ENCODE measurements at regions of chr9 and their contacts with region 1.

Region 1: DNA sequence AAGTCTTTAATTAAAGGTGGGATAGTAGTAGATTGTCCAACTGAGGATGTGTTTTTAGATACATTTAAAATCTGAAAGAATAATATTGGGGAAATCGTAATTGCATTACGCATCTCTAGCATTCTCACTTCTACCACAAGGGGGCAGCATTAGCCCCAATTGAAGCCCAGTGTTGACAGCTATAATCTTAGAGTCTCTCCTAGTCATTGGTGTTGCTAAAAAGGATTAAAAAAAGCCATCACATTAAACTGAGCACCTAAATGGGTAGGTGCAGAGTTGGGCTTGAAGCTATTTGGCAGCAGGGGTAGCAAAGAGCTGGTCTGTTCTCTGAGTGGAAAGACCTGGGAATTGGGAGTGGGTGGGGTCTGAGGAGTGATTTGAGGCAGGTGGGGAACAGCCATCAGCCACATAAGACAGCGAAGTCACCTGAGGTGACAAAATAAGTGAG is 177.2 kb downstream of the OSTF1 start:
- DNase-seq: peak; percentile 5
- ATAC-seq: no peak
- H3K4me3 ChIP-seq: no peak overlapping the region
- H3K27ac ChIP-seq: no peak overlapping the region
- H3K4me1 ChIP-seq: no peaks in the 10 kb centered on the region
- H3K27me3 ChIP-seq: no peaks in the 10 kb centered on the region
- CTCF ChIP-seq: peak; percentile 77

Region 2: GRCh38 chr9:75242426-75242825 is 23.1 kb before region 1 on chr9:
- CTCF ChIA-PET with region 1: no interaction called
- POLR2A ChIA-PET with region 1: no interaction called
- in situ Hi-C with region 1: no loop called
- intact Hi-C with region 1: no loop called
- DNase-seq: no peak
- ATAC-seq: no peak
- H3K4me3 ChIP-seq: no peak overlapping the region
- H3K27ac ChIP-seq: no peak overlapping the region
- H3K4me1 ChIP-seq: no peaks in the 10 kb centered on the region
- H3K27me3 ChIP-seq: no peaks in the 10 kb centered on the region; the same call in 1 of the 2 replicates
- CTCF ChIP-seq: no peak

Region 3: GRCh38 chr9:75866273-75866871 is 600.8 kb after region 1 on chr9:
- CTCF ChIA-PET with region 1: interaction called, 4 read pairs
- POLR2A ChIA-PET with region 1: no interaction called
- in situ Hi-C with region 1: no loop called
- intact Hi-C with region 1: loop called (anchors 5 kb)
- DNase-seq: no peak
- ATAC-seq: no peak
- H3K4me3 ChIP-seq: no peak overlapping the region
- H3K27ac ChIP-seq: no peak overlapping the region
- H3K4me1 ChIP-seq: no peaks in the 10 kb centered on the region
- H3K27me3 ChIP-seq: no peaks in the 10 kb centered on the region
- CTCF ChIP-seq: peak; percentile 67; the same call in 1 of the 2 replicates

Region 4: GRCh38 chr9:76302947-76303940 is 1037.7 kb after region 1 on chr9:
- CTCF ChIA-PET with region 1: no interaction called
- POLR2A ChIA-PET with region 1: no interaction called
- in situ Hi-C with region 1: no loop called
- intact Hi-C with region 1: loop called (anchors 2 kb)
- DNase-seq: no peak
- ATAC-seq: no peak
- H3K4me3 ChIP-seq: no peak overlapping the region
- H3K27ac ChIP-seq: no peak overlapping the region
- H3K4me1 ChIP-seq: no peaks in the 10 kb centered on the region
- H3K27me3 ChIP-seq: no peaks in the 10 kb centered on the region; the same call in 1 of the 2 replicates
- CTCF ChIP-seq: peak; percentile 62